Ovary (tissue), 10 donors: ENCODE measurements at regions of chr5 and their contacts with region 1.

Region 1: GRCh38 chr5:88780736-88781135 is 102.2 kb downstream of the MEF2C start:
- DNase-seq: no peak
- H3K4me3 ChIP-seq: no peak overlapping the region
- H3K27ac ChIP-seq: no peak overlapping the region
- H3K4me1 ChIP-seq: peaks cover 2% of the 10 kb centered on the region
- H3K27me3 ChIP-seq: no peaks in the 10 kb centered on the region
- CTCF ChIP-seq: no peak
- EP300 ChIP-seq: no peak
- POLR2A ChIP-seq: no peak

Region 2: DNA sequence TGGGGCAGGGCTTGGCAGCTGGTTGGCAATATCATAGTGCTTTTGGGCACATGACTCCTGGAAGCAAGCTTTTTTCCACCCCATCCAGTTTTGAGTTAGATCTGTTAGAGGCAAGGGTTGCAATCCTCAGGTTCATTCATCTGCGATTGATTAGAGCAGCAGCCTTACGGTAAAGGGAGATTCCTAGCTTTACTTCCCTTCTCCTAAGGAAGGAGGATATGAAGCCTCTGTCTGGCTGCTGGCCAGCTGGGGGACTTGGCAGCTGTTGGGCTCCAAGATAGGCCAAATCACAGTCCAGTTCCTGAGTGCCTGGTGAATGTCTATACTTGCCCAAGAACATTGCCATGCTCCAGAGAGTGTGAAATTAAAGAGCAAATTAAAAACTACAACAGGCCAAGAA is 1254.6 kb before region 1 on chr5:
- intact Hi-C with region 1: no loop called
- DNase-seq: no peak
- H3K4me3 ChIP-seq: no peak overlapping the region
- H3K27ac ChIP-seq: no peak overlapping the region
- H3K4me1 ChIP-seq: no peaks in the 10 kb centered on the region
- H3K27me3 ChIP-seq: no peaks in the 10 kb centered on the region
- CTCF ChIP-seq: no peak
- EP300 ChIP-seq: no peak
- POLR2A ChIP-seq: no peak

Region 3: DNA sequence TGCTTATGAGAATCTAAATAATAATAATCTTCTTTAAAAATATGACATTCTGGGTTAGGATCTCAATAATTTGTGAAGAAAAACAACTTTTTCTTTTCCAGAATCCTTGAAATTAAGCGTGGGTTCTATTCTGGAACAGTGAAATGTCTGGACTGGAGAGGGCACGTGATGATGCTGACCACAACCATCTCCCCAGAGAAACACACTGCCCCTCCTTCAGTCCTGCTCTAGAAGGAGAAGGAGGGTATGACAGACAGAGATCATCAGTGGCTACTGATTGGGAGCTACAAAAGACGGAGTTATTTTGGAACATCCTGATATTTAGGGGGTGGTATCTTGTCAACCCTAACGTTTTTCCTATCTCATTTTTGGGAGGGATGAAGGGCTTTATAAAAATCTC is 62.0 kb after region 1 on chr5:
- intact Hi-C with region 1: loop called in 1 of 4 experiments (anchors 2 kb)
- DNase-seq: no peak
- H3K4me3 ChIP-seq: no peak overlapping the region
- H3K27ac ChIP-seq: no peak overlapping the region
- H3K4me1 ChIP-seq: peaks cover 3% of the 10 kb centered on the region
- H3K27me3 ChIP-seq: no peaks in the 10 kb centered on the region
- CTCF ChIP-seq: no peak
- EP300 ChIP-seq: no peak
- POLR2A ChIP-seq: no peak

Region 4: DNA sequence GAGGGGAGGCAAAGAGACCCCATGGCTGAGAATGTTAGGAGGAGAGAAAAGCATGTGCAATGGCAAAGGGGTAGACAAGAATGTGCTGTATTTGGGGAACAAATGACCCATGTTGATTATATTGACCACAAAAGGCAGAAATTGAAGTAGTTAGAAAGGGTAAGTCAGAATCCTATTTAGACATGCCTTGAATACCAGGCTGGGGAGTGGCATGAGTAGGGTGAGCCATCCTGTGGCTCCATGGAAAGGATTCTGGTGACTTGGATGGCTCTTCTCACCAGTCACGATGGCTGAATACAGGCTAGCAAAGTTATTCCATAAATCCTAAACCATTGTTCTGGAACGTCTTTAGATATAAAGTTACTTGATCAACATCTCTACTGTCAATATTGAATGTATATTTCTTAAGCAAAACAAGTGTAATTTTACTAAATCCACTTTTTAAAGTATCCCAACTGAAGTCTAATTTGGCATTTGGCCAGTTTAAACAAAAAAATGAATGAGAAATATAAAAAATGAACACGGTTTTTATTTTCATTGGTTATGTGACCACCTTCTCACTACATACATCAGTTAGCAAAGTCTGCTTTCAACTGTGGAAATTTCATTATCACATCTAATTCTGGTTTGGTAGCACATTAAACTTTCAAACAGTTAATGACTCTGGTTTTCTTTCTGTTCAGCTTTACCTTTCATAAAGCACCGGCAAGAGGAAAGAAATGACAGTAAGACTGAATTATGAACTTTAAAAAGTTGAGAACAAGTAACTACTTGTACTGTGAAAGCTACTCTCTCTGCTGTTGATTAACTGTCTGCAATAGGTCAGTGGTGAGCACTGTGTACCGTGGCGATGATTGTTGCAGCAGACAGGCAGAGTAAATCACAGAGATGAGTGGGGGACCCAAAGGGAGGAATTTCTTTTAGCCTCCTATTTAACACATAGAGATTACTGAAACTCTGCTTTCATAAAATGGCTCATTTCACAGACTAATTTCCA is 176.0 kb after region 1 on chr5:
- intact Hi-C with region 1: no loop called
- DNase-seq: no peak
- H3K4me3 ChIP-seq: no peak overlapping the region
- H3K27ac ChIP-seq: no peak overlapping the region
- H3K4me1 ChIP-seq: peaks cover 3% of the 10 kb centered on the region
- H3K27me3 ChIP-seq: no peaks in the 10 kb centered on the region
- CTCF ChIP-seq: no peak
- EP300 ChIP-seq: no peak
- POLR2A ChIP-seq: no peak